ENCODE measurements at regions of chr18 and their contacts with region 1.

Region 1: DNA sequence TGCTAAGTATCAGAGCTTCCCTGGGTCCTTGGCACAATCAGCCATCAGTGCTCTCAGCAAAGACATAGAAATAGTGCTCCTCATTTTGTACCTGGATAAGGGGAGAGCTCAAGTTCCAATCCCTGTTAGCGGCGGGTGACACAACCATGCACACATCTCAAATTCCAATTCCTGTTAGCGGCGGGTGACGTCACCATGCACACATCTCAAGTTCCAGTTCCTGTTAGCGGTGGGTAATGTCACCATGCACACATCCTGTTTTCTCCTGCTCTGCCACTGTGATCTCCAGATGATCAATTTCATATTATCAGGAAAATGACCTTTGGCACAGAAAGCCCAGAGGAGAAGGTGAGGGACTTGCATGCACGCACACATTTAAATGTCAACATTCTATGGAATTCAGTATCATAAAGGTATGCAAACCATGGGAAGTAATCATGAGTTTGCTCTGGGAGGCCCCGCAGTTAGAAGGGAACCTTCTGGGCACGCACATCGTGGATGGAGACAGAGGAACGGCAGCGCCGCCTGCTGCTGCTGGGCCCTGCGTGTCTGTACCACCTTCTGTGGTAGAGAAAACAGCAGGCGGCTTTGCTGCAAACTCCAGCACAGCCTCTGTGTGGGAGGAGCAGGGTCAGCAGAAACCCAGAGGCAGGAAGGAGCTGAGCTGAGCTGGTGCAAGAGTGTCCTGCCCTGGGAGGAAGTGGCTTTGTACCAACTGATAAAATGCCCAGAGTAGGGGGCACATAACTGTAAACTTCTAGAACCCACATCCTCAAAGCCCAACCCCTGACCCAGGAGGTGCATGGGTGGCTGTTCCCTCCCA is 77.8 kb downstream of the MBP start:
- DNase-seq: peak; percentile 90
- ATAC-seq: peak; percentile 82
- H3K4me3 Mint-ChIP-seq: peak overlapping the region; percentile 69
- H3K27ac Mint-ChIP-seq: peak overlapping the region; percentile 100
- H3K4me1 Mint-ChIP-seq: peaks cover 69% of the 10 kb centered on the region
- H3K27me3 Mint-ChIP-seq: no peaks in the 10 kb centered on the region

Region 2: DNA sequence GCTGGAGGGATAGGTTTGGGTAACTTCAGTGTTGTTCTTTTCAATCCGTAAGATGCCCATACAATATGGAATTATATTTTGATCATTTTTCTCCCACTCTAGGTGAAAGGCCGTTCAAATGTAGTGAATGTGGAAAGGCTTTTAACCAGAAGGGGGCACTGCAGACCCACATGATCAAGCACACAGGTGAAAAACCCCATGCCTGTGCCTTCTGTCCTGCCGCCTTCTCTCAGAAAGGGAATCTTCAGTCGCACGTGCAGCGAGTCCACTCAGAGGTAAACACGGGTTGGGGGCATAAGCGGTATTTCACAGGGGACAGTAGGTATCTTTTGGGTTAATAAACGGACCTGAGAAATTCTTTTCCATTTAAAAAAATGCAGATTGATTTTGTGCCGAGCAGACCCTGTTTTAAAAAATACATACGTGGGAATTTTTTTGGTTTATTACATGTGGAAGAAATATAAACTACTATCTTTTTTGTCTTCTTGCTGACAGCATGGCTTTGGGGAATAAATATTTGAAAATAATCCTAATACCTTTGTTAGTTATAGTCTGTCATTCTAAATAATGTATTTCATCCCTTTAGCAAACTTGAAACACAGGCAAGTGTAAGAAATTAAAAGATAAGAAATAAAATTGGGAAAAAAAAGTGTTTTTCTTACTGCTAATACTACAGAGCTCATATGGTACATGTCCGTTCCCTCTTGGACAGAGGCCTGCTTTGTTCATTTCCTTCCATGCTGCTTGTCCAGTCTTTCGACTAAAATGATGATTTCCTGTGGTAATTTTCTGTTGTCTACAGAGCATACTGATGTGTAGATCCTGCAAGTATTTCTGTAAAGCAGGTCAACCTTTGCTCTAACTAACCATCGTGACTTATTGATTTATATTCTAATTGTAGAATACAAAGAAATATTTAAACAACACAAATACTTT is 179.2 kb before region 1 on chr18:
- CTCF ChIA-PET with region 1: no interaction called
- POLR2A ChIA-PET with region 1: no interaction called
- intact Hi-C with region 1: loop called in 1 of 2 experiments (anchors 5 kb)
- DNase-seq: peak; percentile 67
- ATAC-seq: peak; percentile 74
- H3K4me3 Mint-ChIP-seq: no peak overlapping the region
- H3K27ac Mint-ChIP-seq: peak overlapping the region; percentile 74
- H3K4me1 Mint-ChIP-seq: peaks cover 14% of the 10 kb centered on the region
- H3K27me3 Mint-ChIP-seq: no peaks in the 10 kb centered on the region

Region 3: DNA sequence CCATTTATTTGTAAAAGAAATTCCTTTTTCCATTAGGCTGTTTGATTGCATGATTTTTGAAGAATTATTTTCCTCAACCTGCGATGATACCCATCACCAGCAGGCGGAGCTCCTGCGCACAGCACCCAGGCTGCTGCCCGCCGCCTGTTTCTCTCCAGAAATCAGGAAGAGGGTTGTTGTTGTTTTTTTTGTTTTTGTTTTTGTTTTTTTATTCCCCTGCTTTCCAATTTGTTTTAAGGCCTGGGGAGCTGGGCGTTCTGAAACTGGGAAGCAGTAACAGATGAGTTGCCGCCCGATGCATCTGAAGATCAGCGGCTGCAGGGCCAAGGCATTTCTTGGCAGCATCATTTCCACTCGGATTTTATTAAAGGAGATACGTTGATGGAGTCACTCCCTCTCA is 54.3 kb before region 1 on chr18:
- CTCF ChIA-PET with region 1: interaction called, 20 read pairs
- POLR2A ChIA-PET with region 1: interaction called, 4 read pairs
- intact Hi-C with region 1: loop called (anchors 1 kb)
- DNase-seq: peak; percentile 70
- ATAC-seq: no peak
- H3K4me3 Mint-ChIP-seq: no peak overlapping the region
- H3K27ac Mint-ChIP-seq: peak overlapping the region; percentile 17
- H3K4me1 Mint-ChIP-seq: peaks cover 21% of the 10 kb centered on the region
- H3K27me3 Mint-ChIP-seq: no peaks in the 10 kb centered on the region

Region 4: DNA sequence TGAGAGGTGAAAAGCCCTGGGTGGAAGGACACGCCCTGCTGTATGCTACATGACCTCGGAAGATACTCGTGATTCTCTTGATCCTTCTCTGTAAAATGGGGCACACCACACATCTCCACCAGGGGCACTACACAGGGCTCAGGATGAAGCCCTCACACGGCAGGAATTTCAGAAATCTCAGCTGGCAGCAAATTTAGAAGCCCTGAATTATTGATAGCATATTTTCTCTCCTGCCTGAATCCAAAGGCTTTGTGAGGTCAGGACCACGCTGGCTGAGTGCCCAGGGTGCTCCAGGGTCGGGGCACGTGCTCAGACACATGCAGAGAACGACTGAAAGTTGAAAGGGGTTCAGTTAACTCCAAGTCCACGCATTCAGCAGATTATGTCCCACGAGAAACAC is 152.7 kb after region 1 on chr18:
- CTCF ChIA-PET with region 1: interaction called, 3 read pairs
- POLR2A ChIA-PET with region 1: interaction called, 10 read pairs
- intact Hi-C with region 1: loop called in 1 of 2 experiments (anchors 1 kb)
- DNase-seq: peak; percentile 69
- ATAC-seq: peak; percentile 84
- H3K4me3 Mint-ChIP-seq: no peak overlapping the region
- H3K27ac Mint-ChIP-seq: peak overlapping the region; percentile 73
- H3K4me1 Mint-ChIP-seq: peaks cover 44% of the 10 kb centered on the region
- H3K27me3 Mint-ChIP-seq: no peaks in the 10 kb centered on the region

Region 5: DNA sequence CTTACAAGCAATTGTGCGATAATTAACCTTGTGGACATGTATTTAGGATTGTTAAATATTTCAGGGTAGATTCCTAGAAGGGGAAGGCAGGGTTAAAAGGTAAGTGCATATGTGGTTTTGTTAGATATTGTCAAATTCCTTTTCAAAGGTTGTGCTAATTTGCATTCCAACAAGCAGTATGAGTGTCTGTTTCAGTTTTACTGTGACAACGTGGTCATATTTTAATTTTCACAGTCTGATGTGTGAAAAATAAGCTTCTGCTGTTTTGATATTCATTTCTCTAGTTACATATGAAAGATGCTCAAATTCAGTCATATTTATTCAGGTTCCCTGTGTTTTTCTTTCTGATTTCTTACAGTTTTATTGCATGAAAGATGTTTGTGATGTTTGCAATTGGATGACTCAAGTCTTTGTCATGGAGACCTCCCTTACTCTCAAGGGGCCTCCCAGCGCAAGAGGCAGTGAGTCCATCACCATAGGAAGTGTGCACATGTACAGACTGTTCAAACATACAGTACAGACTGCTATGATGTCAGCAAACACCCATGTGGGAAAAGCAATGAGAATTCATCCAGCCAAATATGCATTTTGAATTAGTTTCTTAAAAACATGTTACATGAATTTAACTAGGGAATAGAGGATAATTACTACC is 505.6 kb after region 1 on chr18:
- CTCF ChIA-PET with region 1: no interaction called
- POLR2A ChIA-PET with region 1: no interaction called
- intact Hi-C with region 1: loop called in 1 of 2 experiments (anchors 5 kb)
- DNase-seq: peak; percentile 33
- ATAC-seq: peak; percentile 96
- H3K4me3 Mint-ChIP-seq: no peak overlapping the region
- H3K27ac Mint-ChIP-seq: no peak overlapping the region
- H3K4me1 Mint-ChIP-seq: peaks cover 9% of the 10 kb centered on the region
- H3K27me3 Mint-ChIP-seq: peaks cover 19% of the 10 kb centered on the region